ENCODE measurements at regions of chrX and their contacts with region 1.

Region 1: DNA sequence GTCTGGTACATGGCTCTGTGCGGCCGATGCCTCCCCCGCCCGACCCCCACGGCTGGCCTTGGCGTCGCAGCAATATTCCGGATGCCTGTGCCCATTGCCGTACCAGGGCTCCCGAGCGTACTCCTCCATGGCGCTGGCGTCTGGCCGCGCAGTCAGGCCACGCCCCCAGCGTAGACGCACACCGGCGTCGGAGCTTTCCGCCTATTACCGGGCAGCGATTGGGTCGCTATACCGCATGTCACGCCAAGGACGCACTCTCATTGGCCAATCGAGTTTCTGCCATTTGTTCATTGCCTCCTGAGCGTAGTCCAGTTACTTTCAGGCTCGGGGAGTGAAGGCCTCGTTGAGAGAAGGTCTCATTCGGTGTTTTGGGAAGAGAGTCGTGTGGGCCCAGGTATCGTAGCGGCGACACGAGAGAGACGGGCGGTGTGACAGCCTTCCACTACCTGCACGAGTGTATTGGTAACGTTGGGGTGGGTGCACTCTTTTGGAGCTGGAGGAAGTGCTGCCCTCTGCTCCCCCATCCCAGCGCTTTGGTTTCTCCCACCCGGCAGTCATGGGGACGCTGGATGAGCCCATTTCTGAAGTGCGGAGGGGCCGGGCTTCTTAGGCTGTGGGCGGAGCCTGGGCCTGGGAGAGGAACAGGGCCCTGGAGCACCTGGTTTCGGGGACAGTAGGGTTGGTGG is at the starts of genes PQBP1 and TIMM17B:
- DNase-seq: peak; percentile 79 to 94 (median 87)
- ATAC-seq: peak; percentile 86
- H3K4me3 Mint-ChIP-seq: peak within 1 kb of the TSS; percentile 88 to 98 (median 92)
- H3K27ac Mint-ChIP-seq: peak within 1 kb of the TSS; percentile 92 to 100 (median 96)
- H3K4me1 Mint-ChIP-seq: peaks cover 4 to 41% (median 26%) of the 10 kb centered on the region in 4 donors
- H3K27me3 Mint-ChIP-seq: no peaks in the 10 kb centered on the region
- polyA plus RNA-seq, gene PQBP1: 92.7 to 114 (median 94.5) TPM
- polyA plus RNA-seq, gene TIMM17B: 52.9 to 59.1 (median 55.5) TPM

Region 2: GRCh38 chrX:48911412-48912182 is 13.8 kb after region 1 on chrX and contains the start of gene SLC35A2:
- POLR2A ChIA-PET with region 1: interaction called, 23 read pairs
- DNase-seq: peak; percentile 72 to 94 (median 90)
- ATAC-seq: peak; percentile 79 to 80
- H3K4me3 Mint-ChIP-seq: peak within 1 kb of the TSS; percentile 89 to 97 (median 94)
- H3K27ac Mint-ChIP-seq: peak within 1 kb of the TSS; percentile 88 to 98 (median 96)
- H3K4me1 Mint-ChIP-seq: peaks cover 16 to 59% (median 47%) of the 10 kb centered on the region in 4 donors
- H3K27me3 Mint-ChIP-seq: no peaks in the 10 kb centered on the region
- polyA plus RNA-seq, gene SLC35A2: 6.8 to 8.1 (median 7.3) TPM

Region 3: DNA sequence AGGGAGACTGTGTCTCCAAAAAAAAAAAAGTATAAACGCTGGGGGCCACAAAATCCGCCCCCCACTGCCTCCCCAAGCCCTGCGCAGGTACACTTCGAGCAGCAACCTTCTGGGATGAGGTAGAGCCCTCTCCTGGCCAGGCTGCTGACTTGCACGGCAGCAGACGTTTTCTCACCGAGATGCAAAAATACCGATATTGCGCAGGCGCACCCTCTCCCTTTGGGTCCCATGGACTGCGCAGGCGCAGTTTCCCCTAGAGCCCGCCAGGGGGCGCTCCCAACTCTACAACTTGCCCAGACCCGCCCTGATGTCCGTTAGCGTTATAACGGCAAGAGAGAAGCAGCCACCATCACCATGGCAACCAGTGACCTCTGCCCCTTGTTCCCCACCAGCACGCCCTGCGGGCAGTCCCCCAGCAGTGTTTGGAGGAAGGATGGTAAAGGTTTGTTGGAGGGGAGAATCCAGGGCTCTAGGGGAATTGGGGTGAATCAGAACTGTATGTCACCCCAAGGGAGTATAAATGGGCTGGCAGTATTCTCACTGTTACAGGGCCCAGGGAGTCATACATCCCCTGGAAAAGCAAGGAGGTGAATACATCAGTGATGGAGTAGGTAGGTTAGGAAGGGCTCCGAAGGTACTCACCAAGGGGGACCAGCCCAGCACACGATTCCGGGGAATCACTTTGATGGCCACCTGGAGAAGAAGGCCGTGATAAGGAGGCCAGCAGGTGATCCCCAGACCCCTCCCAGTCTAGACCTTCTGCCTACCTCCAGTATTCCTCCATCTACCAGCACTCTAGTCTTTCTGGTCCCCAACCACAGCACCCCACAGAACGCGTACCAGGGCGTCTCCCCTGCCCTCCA is 19.6 kb after region 1 on chrX:
- POLR2A ChIA-PET with region 1: interaction called, 23 read pairs
- DNase-seq: peak; percentile 70 to 95 (median 89)
- ATAC-seq: peak; percentile 30 to 34
- H3K4me3 Mint-ChIP-seq: peak overlapping the region; percentile 95 to 99 (median 98)
- H3K27ac Mint-ChIP-seq: peak overlapping the region; percentile 87 to 99 (median 97)
- H3K4me1 Mint-ChIP-seq: peaks cover 14 to 69% (median 49%) of the 10 kb centered on the region in 4 donors
- H3K27me3 Mint-ChIP-seq: peaks cover 0 to 2% (median 0%) of the 10 kb centered on the region in 5 donors

Region 4: DNA sequence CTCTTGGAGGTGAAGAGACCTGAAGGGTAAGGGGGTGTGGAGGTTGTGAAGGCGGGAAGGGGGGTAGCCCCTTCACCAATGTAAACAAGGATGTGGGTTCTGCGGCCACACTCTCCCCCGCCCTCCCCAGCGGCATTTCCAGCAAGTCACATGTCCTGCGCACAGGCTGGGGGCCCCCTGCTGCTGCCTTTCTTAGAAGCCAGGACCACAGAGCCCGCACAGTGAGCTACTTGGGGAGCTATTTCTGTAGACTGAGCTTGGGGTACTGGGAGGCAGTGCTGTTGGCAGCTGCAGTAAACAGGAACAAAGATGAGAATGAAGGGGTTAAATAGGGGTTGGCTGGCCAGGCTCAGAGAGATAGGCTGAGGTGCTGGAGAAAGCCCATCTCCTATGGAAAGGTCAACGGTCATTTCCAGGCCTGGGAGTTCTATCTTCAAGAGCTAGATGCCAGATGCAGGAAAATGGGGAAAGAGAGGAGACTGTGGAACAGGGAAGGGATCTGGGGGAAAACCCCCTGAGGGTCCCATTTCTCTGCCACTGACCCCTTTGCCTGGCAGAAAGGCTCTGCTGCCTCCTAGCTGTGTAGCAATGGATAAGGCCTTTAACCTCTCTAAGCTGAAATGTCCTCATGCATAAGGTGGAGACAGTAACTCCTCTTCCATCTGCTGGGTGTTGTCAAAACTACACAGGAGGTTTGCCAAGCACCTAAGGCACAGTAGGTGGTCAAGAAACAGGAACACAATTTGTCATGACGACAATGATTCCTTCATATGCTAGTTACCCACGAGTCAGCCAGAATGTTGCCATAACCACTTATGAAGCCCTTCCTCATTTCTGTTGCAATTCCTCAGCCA is 39.5 kb after region 1 on chrX:
- POLR2A ChIA-PET with region 1: interaction called, 26 read pairs
- DNase-seq: peak; percentile 65 to 97 (median 92)
- ATAC-seq: peak; percentile 72 to 73
- H3K4me3 Mint-ChIP-seq: peak overlapping the region; percentile 78 to 92 (median 87)
- H3K27ac Mint-ChIP-seq: peak overlapping the region; percentile 96 to 99 (median 99)
- H3K4me1 Mint-ChIP-seq: peaks cover 35 to 87% (median 81%) of the 10 kb centered on the region in 4 donors
- H3K27me3 Mint-ChIP-seq: no peaks in the 10 kb centered on the region

Region 5: GRCh38 chrX:48972220-48973167 is 74.7 kb after region 1 on chrX:
- POLR2A ChIA-PET with region 1: interaction called, 10 read pairs
- DNase-seq: peak in 4 of 10 donors; percentile 16 to 28 (median 19)
- ATAC-seq: peak; percentile 66 to 71
- H3K4me3 Mint-ChIP-seq: peak overlapping the region; percentile 22 to 65 (median 58)
- H3K27ac Mint-ChIP-seq: peak overlapping the region in 3 of 10 donors; percentile 6 to 76 (median 49)
- H3K4me1 Mint-ChIP-seq: peaks cover 8 to 34% (median 12%) of the 10 kb centered on the region in 4 donors
- H3K27me3 Mint-ChIP-seq: peaks cover 0 to 1% (median 0%) of the 10 kb centered on the region in 5 donors